H1 (cell line): ENCODE measurements at regions of chr1 and their contacts with region 1.

Region 1: DNA sequence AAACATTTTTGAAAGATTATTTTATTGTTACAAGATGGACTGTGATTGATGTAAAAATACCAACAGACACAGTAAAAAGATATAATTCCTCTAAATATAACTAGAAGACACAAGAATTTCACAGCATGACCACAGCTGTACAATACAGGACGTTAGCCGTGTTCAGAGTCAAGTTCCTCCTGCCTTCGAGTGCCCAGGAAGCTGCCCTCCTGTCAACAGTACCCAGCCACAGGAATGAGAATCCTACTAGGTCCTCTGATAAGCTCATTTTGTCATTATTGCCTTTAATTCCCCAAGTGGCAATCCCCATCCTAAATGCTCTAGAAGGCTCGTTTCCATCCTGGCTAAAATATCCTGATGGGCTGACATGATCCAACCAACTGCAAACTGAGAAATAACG is 16.4 kb upstream of the CAPN2 start:
- DNase-seq: no peak
- H3K4me3 ChIP-seq: no peak overlapping the region
- H3K27ac ChIP-seq: no peak overlapping the region
- H3K4me1 ChIP-seq: peaks cover 0 to 2% (median 0%) of the 10 kb centered on the region in 4 experiments; a peak in 1 of 7 replicates
- H3K27me3 ChIP-seq: no peaks in the 10 kb centered on the region
- CTCF ChIP-seq: no peak
- EP300 ChIP-seq: no peak
- POLR2A ChIP-seq: no peak
- RAD21 ChIP-seq: no peak

Region 2: DNA sequence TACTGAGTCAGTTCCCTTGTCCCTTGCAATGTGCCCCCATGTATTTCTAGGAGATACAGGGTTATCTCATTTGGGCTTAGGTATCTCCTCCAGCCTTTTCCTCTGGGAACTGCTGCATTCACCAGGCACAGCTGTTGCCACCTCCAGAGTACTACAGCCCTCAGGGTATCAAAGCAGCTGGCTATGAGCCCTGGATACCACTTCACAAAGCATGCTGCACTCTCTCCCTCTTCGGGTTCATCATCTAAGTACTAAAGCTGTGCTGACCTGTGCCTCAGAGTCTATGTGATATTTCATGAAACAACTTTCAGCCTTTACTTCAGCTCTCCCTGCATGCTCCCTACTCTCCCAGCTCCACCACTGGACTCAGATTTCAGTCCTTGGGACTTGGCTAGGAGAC is 240.5 kb before region 1 on chr1:
- CTCF ChIA-PET with region 1: no interaction called
- POLR2A ChIA-PET with region 1: no interaction called
- DNase-seq: no peak
- H3K4me3 ChIP-seq: no peak overlapping the region
- H3K27ac ChIP-seq: no peak overlapping the region
- H3K4me1 ChIP-seq: no peaks in the 10 kb centered on the region
- H3K27me3 ChIP-seq: no peaks in the 10 kb centered on the region
- CTCF ChIP-seq: no peak
- EP300 ChIP-seq: no peak
- POLR2A ChIP-seq: no peak
- RAD21 ChIP-seq: no peak

Region 3: GRCh38 chr1:223712194-223712849 is 16.4 kb after region 1 on chr1 and contains the start of gene CAPN2:
- CTCF ChIA-PET with region 1: interaction called, 28 read pairs
- POLR2A ChIA-PET with region 1: interaction called, 3 read pairs
- DNase-seq: peak in 1 of 2 experiments; percentile 83
- H3K4me3 ChIP-seq: peak within 1 kb of the TSS; percentile 58 to 76 (median 62)
- H3K27ac ChIP-seq: no peak within 1 kb of the TSS; the same call in 1 of the 2 replicates
- H3K4me1 ChIP-seq: peaks cover 3 to 10% (median 7%) of the 10 kb centered on the region in 4 experiments
- H3K27me3 ChIP-seq: peaks cover 0 to 50% (median 38%) of the 10 kb centered on the region in 4 experiments; a peak in 6 of 7 replicates
- CTCF ChIP-seq: peak; percentile 67 to 85 (median 68)
- EP300 ChIP-seq: no peak
- POLR2A ChIP-seq: peak in 1 of 2 experiments; percentile 30; a peak in 1 of 3 replicates
- RAD21 ChIP-seq: peak; percentile 68 to 88
- total RNA-seq, gene CAPN2: 9.2 and 9.4 TPM in 2 replicates

Region 4: DNA sequence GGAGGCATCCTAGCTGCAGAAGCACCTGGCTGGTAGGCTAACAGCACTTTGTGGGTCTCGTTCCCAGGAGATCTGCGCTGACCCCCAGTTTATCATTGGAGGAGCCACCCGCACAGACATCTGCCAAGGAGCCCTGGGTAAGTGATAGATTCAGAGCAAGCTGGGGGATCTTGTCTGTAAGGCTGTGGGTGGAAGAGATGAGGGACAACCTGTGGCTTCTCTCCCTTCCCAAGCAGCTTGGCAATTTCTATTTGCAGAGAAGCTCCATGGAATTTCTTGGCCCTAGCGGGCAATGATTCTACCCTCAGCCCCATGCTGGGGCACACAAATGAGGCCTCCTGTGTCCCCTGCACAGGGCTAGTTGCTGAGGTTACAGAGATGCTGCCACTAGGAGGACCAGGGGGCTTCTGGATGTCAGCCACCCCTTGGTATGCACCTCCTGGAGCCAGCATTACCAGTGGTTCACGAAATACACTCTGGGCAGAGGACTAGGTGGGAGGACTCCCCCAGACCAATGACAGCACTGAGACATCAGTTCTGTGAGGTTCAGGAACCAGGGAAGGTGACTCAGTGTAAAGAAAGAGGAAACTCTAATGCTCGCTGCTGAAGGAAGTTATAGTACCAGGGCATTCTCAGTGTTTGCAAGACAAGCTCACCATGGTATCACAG is 21.9 kb after region 1 on chr1:
- CTCF ChIA-PET with region 1: interaction called, 10 read pairs
- POLR2A ChIA-PET with region 1: no interaction called
- DNase-seq: no peak
- H3K4me3 ChIP-seq: no peak overlapping the region
- H3K27ac ChIP-seq: no peak overlapping the region
- H3K4me1 ChIP-seq: peaks cover 4 to 26% (median 16%) of the 10 kb centered on the region in 4 experiments; a peak in 6 of 7 replicates
- H3K27me3 ChIP-seq: peaks cover 0 to 73% (median 70%) of the 10 kb centered on the region in 4 experiments; a peak in 6 of 7 replicates
- CTCF ChIP-seq: no peak
- EP300 ChIP-seq: no peak
- POLR2A ChIP-seq: no peak
- RAD21 ChIP-seq: no peak; a peak in 1 of 4 replicates

Region 5: GRCh38 chr1:223726380-223727001 is 30.6 kb after region 1 on chr1:
- CTCF ChIA-PET with region 1: interaction called, 10 read pairs
- POLR2A ChIA-PET with region 1: no interaction called
- DNase-seq: peak in 1 of 2 experiments; percentile 64
- H3K4me3 ChIP-seq: no peak overlapping the region
- H3K27ac ChIP-seq: 0 out of 2 replicates have a peak overlapping the region, but pooled peaks have one; percentile 25
- H3K4me1 ChIP-seq: peaks cover 9 to 25% (median 16%) of the 10 kb centered on the region in 4 experiments
- H3K27me3 ChIP-seq: peaks cover 7 to 50% (median 41%) of the 10 kb centered on the region in 4 experiments
- CTCF ChIP-seq: no peak
- EP300 ChIP-seq: no peak
- POLR2A ChIP-seq: no peak
- RAD21 ChIP-seq: no peak